Gastrocnemius medialis (tissue), 4 donors: ENCODE measurements at regions of chr10 and their contacts with region 1.

Region 1: GRCh38 chr10:125123476-125124114 is 36.8 kb downstream of the CTBP2 start:
- DNase-seq: peak; percentile 89 to 96
- ATAC-seq: peak; percentile 44 to 62
- H3K4me3 ChIP-seq: peak overlapping the region; percentile 34 to 50 (median 45)
- H3K27ac ChIP-seq: peak overlapping the region; percentile 91 to 97 (median 97)
- H3K4me1 ChIP-seq: peaks cover 98 to 100% of the 10 kb centered on the region in 2 donors
- H3K27me3 ChIP-seq: no peaks in the 10 kb centered on the region
- CTCF ChIP-seq: no peak
- POLR2A ChIP-seq: peak; percentile 75 to 76

Region 2: DNA sequence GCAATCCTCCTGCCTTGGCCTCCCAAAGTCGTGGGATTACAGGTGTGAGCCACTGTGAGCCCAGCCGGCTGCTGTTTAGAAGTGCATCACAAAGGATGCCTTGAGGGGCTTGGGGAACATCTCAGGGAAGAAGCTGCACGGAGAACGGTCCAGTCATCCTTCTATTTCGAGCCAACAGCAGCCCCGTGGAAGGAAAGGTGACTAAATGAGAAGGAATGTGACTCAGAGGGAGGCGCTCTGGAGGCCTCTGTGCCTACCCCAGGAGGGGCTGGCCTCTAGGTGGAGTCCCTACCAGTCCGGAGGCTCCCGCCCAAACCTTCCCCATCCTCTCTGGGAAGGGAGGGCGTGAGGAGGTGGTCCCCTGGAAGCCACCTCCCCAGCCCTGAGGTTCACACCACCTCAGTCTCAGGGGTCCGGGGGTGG is 39.4 kb before region 1 on chr10:
- in situ Hi-C with region 1: no loop called
- intact Hi-C with region 1: loop called (anchors 2 kb)
- DNase-seq: peak; percentile 75 to 88
- ATAC-seq: peak; percentile 67 to 74
- H3K4me3 ChIP-seq: peak overlapping the region in 1 of 4 donors; percentile 5
- H3K27ac ChIP-seq: peak overlapping the region; percentile 86 to 91 (median 89)
- H3K4me1 ChIP-seq: peaks cover 79 to 85% of the 10 kb centered on the region in 2 donors
- H3K27me3 ChIP-seq: no peaks in the 10 kb centered on the region
- CTCF ChIP-seq: peak in 4 of 5 experiments; percentile 4 to 33 (median 20)
- POLR2A ChIP-seq: peak in 1 of 2 donors; percentile 15

Region 3: DNA sequence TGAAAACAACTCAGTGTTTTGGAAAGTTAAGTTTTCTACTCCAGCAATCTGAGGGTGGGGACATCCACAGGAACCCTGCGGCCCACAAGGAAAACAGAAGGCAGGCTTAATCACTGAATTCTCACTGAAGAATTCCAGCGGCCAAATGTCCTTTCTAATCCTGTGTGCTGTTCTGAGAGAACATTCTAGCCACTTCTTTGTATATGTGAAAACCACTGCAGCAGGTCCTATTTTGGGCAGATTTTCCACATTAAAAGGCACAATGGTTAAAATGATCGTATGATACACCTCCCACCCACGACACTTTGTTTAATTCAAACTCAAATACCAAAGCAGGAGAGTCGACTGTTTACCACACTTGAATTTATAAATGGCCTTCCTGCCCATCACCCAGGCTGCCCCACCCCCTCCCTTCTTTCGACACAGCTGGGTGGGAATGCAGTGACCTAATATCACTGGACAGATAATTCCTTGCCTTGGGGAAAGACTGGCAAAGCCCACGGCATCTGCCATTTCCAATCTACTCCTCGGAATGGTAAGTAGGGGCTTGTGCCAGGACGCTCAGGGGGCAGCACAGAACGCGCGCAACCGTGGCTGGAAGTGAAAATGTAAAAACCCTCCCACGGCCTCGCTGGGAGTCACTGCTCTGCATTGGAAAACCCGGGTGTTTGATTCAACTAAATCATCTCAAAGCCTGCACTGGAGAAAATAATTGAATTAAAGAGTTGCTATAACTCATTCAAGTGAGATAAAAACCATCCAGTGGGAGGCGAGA is 30.2 kb before region 1 on chr10:
- in situ Hi-C with region 1: no loop called
- intact Hi-C with region 1: loop called (anchors 2 kb)
- DNase-seq: peak; percentile 63 to 86
- ATAC-seq: peak; percentile 83 to 90
- H3K4me3 ChIP-seq: peak overlapping the region in 3 of 4 donors; percentile 24 to 34 (median 28)
- H3K27ac ChIP-seq: peak overlapping the region; percentile 73 to 83 (median 77)
- H3K4me1 ChIP-seq: peaks cover 70 to 73% of the 10 kb centered on the region in 2 donors
- H3K27me3 ChIP-seq: no peaks in the 10 kb centered on the region
- CTCF ChIP-seq: no peak
- POLR2A ChIP-seq: no peak